ENCODE measurements at regions of chr1 and their contacts with region 1.

Region 1: DNA sequence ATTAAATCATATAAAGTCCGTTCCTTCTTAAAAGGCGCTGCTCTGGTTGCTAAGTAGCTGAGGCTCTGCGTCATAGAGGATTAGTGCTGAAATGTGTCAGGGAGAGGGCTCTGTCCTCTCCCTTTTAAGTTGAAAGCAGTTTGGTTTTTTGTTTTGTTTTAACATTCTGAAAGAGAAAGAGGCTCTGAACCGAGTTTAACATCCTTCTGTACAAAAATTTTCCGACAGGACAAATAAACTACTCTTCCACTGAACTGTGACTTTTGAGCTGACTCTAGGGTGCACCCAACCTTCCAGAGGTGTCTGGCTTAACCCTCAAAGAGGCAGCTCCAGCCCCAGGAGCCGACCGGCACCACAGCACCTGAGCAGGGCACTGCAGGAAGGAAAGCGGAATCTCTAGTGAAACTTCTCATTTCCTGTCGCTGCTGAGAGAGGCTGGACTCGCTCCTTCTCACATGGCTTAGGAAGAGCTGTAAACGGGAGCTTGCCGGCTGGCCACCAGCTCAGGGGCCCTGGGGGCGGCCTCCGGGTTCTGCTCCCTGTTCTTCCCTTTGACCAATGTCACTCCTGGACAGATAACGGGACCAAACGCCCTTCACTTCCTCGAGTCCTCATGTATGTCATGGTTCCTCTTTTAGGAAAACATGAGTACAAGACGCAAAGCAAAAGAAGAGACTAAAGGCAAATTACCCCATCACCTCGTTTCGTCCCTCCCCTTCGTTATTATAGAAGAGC is 1.2 kb downstream of the VAV3 start:
- DNase-seq: peak in 33 of 35 experiments; percentile 18 to 71 (median 31)
- ATAC-seq: peak; percentile 49 to 81 (median 56)
- H3K4me3 ChIP-seq: peak overlapping the region; percentile 80 to 96
- H3K4me3 Mint-ChIP-seq: peak overlapping the region; percentile 92 to 98 (median 96)
- H3K27ac ChIP-seq: peak overlapping the region; percentile 83
- H3K27ac Mint-ChIP-seq: peak overlapping the region; percentile 95 to 96
- H3K4me1 ChIP-seq: peaks cover 23 to 26% of the 10 kb centered on the region in 2 experiments
- H3K4me1 Mint-ChIP-seq: peaks cover 28 to 43% (median 36%) of the 10 kb centered on the region in 3 donors
- H3K27me3 ChIP-seq: peaks cover 0 to 6% of the 10 kb centered on the region in 2 experiments
- H3K27me3 Mint-ChIP-seq: no peaks in the 10 kb centered on the region

Region 2: DNA sequence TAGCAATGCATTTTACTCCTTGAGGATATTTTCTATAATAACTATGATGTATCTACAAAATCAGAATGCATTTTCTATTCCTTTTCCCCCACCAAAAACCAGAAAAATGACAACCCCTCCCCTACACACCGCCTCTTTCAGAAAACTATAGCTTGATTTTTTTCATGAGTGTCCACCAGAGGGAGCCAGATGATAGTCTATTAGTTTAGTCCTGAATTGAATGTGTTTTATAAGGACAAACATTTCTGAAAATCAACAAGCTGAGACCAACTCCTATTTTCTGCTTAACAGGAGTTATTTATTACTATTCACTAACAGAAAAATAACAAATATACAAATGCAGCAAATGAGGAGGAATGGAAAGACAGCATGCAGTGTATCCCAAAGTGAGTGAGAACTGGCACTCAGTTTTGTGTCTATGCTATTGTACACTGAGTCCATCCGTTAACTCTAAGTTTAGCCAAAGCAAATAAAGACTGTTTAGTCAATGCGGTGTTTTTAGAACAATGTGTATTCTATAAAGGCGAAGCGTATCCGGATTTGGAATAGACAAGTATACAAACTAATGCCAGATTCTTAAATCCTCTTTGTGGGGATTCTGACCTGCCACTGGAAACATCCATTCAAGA is 181.4 kb before region 1 on chr1:
- CTCF ChIA-PET with region 1: interaction called, 4 to 20 read pairs
- POLR2A ChIA-PET with region 1: interaction called, 3 to 13 read pairs
- DNase-seq: peak in 16 of 35 experiments; percentile 5 to 85 (median 34)
- ATAC-seq: no peak
- H3K4me3 ChIP-seq: no peak overlapping the region
- H3K4me3 Mint-ChIP-seq: no peak overlapping the region
- H3K27ac ChIP-seq: no peak overlapping the region
- H3K27ac Mint-ChIP-seq: no peak overlapping the region
- H3K4me1 ChIP-seq: peaks cover 20 to 22% of the 10 kb centered on the region in 2 experiments
- H3K4me1 Mint-ChIP-seq: peaks cover 33 to 42% (median 35%) of the 10 kb centered on the region in 3 donors
- H3K27me3 ChIP-seq: no peaks in the 10 kb centered on the region
- H3K27me3 Mint-ChIP-seq: no peaks in the 10 kb centered on the region

Region 3: DNA sequence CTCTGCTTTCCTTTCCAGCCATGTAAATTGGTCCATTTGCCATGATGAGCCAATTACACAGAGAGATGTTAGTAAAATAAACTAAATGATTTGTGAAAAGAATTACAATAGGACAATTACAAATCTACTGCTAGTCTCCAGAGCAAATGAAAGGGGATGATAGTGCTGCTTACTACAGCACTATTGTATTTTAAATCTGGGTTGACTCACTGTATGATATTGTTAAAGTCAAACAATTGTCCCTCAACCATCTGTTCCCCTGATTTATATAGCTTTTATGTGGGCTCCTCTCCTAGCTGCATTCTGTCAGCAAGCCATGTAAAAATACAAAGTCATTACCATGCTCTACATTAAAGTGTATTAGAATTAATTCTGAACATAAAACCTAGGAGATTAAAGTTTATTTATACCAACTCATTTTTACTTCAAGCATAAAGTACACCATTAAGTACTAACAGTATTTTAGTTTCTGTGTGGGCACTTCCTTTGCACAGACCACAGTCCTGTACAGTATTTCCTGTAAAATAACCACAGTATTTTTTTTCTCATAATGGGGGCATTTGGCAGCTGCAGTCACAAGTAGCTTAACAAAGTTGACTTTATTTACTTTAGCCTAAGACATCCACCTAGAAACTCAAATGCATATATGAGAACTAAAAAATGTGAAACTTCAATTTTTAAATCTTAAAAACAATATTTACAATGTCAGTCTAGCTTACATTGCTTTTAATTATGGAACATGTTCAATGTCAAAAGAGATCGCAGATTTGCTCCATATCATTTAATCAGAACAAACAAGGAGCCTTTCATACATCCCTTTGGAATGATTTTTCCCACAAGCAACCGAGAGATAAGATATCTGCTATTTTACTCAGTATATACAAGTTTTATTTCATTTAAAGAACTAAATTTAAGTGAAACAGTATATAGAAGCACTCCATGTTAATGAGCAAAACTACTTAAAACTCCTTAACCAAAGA is 134.4 kb before region 1 on chr1:
- CTCF ChIA-PET with region 1: interaction called in 1 of 2 experiments, 11 read pairs
- POLR2A ChIA-PET with region 1: no interaction called
- DNase-seq: peak in 1 of 35 experiments; percentile 43
- ATAC-seq: peak; percentile 52 to 91 (median 80)
- H3K4me3 ChIP-seq: no peak overlapping the region
- H3K4me3 Mint-ChIP-seq: peak overlapping the region in 2 of 3 donors; percentile 24 to 28
- H3K27ac ChIP-seq: peak overlapping the region; percentile 35
- H3K27ac Mint-ChIP-seq: peak overlapping the region; percentile 80 to 84
- H3K4me1 ChIP-seq: peaks cover 20 to 21% of the 10 kb centered on the region in 2 experiments
- H3K4me1 Mint-ChIP-seq: peaks cover 46 to 59% (median 46%) of the 10 kb centered on the region in 3 donors
- H3K27me3 ChIP-seq: no peaks in the 10 kb centered on the region
- H3K27me3 Mint-ChIP-seq: no peaks in the 10 kb centered on the region

Region 4: GRCh38 chr1:107870696-107871095 is 93.1 kb before region 1 on chr1:
- CTCF ChIA-PET with region 1: no interaction called
- POLR2A ChIA-PET with region 1: no interaction called
- DNase-seq: no peak
- ATAC-seq: no peak
- H3K4me3 ChIP-seq: no peak overlapping the region
- H3K4me3 Mint-ChIP-seq: no peak overlapping the region
- H3K27ac ChIP-seq: no peak overlapping the region
- H3K27ac Mint-ChIP-seq: no peak overlapping the region
- H3K4me1 ChIP-seq: peaks cover 2 to 10% of the 10 kb centered on the region in 2 experiments
- H3K4me1 Mint-ChIP-seq: peaks cover 8 to 36% (median 21%) of the 10 kb centered on the region in 3 donors
- H3K27me3 ChIP-seq: no peaks in the 10 kb centered on the region
- H3K27me3 Mint-ChIP-seq: no peaks in the 10 kb centered on the region

Region 5: GRCh38 chr1:108118018-108118902 is 154.5 kb after region 1 on chr1:
- CTCF ChIA-PET with region 1: no interaction called
- POLR2A ChIA-PET with region 1: no interaction called
- DNase-seq: no peak
- ATAC-seq: no peak
- H3K4me3 ChIP-seq: no peak overlapping the region
- H3K4me3 Mint-ChIP-seq: no peak overlapping the region
- H3K27ac ChIP-seq: no peak overlapping the region
- H3K27ac Mint-ChIP-seq: no peak overlapping the region
- H3K4me1 ChIP-seq: peaks cover 0 to 2% of the 10 kb centered on the region in 2 experiments
- H3K4me1 Mint-ChIP-seq: peaks cover 6 to 20% (median 9%) of the 10 kb centered on the region in 3 donors
- H3K27me3 ChIP-seq: no peaks in the 10 kb centered on the region
- H3K27me3 Mint-ChIP-seq: no peaks in the 10 kb centered on the region

Measured in T-cell (primary cell).